Mammary epithelial cell (primary cell): ENCODE measurements at regions of chr14 and their contacts with region 1.

Region 1: DNA sequence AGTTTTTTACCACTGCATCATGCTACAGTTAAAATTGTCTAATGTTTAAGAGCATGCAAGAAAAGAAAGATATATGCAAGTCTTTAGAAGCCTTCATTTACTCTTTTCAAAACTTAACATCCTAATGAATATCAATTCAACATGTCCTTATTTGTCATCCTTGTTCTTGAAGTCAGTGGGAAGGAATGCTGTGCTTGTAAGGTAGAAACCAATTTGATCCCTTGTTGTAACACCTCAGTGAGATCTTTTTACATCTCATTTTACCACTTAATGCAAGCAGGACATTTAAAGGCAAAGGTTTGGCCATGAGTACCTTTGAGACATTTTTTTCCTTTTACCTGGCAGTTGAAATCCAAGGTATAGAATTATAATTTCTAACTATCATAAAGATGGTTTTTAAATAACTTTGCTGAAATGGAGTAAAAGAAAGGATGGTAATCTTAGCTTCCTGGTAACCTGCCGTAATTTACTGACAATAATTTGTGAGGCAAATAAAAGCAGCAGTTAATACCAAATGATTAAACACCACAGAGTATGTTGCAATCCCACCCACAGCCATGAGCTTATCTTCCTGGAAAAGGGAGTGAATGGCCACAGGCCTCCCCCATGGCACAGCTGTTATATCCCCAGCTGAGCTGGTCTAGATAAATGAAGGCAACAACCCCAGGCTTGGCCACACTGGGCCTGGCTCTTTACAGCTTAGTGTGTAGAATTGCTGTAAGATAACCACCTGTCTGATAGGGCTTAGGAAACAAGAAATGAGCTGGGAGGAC is 33.2 kb upstream of the STRN3 start:
- DNase-seq: peak; percentile 75
- H3K4me3 ChIP-seq: peak overlapping the region in 1 of 3 experiments; percentile 23
- H3K27ac ChIP-seq: peak overlapping the region; percentile 92
- H3K4me1 ChIP-seq: peaks cover 45% of the 10 kb centered on the region
- H3K27me3 ChIP-seq: no peaks in the 10 kb centered on the region
- CTCF ChIP-seq: no peak

Region 2: GRCh38 chr14:30994681-30995620 is 64.4 kb before region 1 on chr14:
- CTCF ChIA-PET with region 1: no interaction called
- dilution Hi-C with region 1: loop called (anchors 5 kb)
- in situ Hi-C with region 1: no loop called
- intact Hi-C with region 1: no loop called
- DNase-seq: peak; percentile 32
- H3K4me3 ChIP-seq: no peak overlapping the region
- H3K27ac ChIP-seq: peak overlapping the region; percentile 55
- H3K4me1 ChIP-seq: peaks cover 25% of the 10 kb centered on the region
- H3K27me3 ChIP-seq: no peaks in the 10 kb centered on the region
- CTCF ChIP-seq: no peak

Region 3: GRCh38 chr14:31070431-31070830 is 11.1 kb after region 1 on chr14:
- CTCF ChIA-PET with region 1: interaction called, 3 read pairs
- dilution Hi-C with region 1: no loop called
- in situ Hi-C with region 1: no loop called
- intact Hi-C with region 1: loop called (anchors 1 kb)
- DNase-seq: peak; percentile 83
- H3K4me3 ChIP-seq: no peak overlapping the region
- H3K27ac ChIP-seq: peak overlapping the region; percentile 40
- H3K4me1 ChIP-seq: peaks cover 6% of the 10 kb centered on the region
- H3K27me3 ChIP-seq: no peaks in the 10 kb centered on the region
- CTCF ChIP-seq: no peak